SK-N-SH (cell line): ENCODE measurements at regions of chr1 and their contacts with region 1.

Region 1: GRCh38 chr1:18299441-18300338 is 181.0 kb upstream of the KLHDC7A start:
- DNase-seq: peak; percentile 73
- H3K4me3 ChIP-seq: no peak overlapping the region; a peak in 1 of 4 replicates
- H3K27ac ChIP-seq: no peak overlapping the region
- H3K4me1 ChIP-seq: peaks cover 0 to 4% of the 10 kb centered on the region in 2 experiments; a peak in 1 of 4 replicates
- H3K27me3 ChIP-seq: no peaks in the 10 kb centered on the region
- CTCF ChIP-seq: peak; percentile 41
- EP300 ChIP-seq: no peak
- RAD21 ChIP-seq: peak; percentile 58

Region 2: GRCh38 chr1:18139198-18139981 is 160.3 kb before region 1 on chr1:
- CTCF ChIA-PET with region 1: interaction called, 11 read pairs
- POLR2A ChIA-PET with region 1: no interaction called
- DNase-seq: peak; percentile 55
- H3K4me3 ChIP-seq: no peak overlapping the region
- H3K27ac ChIP-seq: peak overlapping the region in 1 of 2 experiments; percentile 92; a peak in 2 of 4 replicates
- H3K4me1 ChIP-seq: peaks cover 0 to 70% of the 10 kb centered on the region in 2 experiments; a peak in 1 of 4 replicates
- H3K27me3 ChIP-seq: no peaks in the 10 kb centered on the region
- CTCF ChIP-seq: no peak
- EP300 ChIP-seq: peak in 1 of 2 experiments; percentile 66; a peak in 2 of 4 replicates
- RAD21 ChIP-seq: peak; percentile 24; the same call in 1 of the 2 replicates

Region 3: GRCh38 chr1:18187054-18187453 is 112.6 kb before region 1 on chr1:
- CTCF ChIA-PET with region 1: no interaction called
- POLR2A ChIA-PET with region 1: no interaction called
- DNase-seq: no peak
- H3K4me3 ChIP-seq: no peak overlapping the region
- H3K27ac ChIP-seq: no peak overlapping the region
- H3K4me1 ChIP-seq: peaks cover 0 to 37% of the 10 kb centered on the region in 2 experiments; a peak in 1 of 4 replicates
- H3K27me3 ChIP-seq: no peaks in the 10 kb centered on the region
- CTCF ChIP-seq: no peak
- EP300 ChIP-seq: no peak
- RAD21 ChIP-seq: no peak

Region 4: DNA sequence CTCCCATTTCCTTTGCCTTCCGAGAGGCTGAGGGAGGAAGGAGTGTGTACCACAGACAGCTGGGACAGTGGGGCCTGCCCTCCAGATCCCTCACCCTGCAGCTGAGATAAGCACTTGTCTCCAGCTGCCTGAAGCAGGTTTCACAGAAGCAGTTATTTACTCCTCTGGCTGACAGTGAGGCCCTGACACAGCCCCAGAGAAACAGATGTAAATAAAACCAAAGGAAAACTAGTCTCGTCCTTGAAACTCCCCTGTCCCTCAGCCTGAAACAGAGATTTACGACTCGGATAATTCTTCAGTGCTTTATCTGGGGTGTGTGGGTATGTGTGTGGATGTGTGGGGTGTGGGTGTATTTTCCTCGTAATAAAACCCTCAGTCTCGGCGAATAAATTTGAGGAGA is 11.0 kb before region 1 on chr1:
- CTCF ChIA-PET with region 1: interaction called, 72 read pairs
- POLR2A ChIA-PET with region 1: no interaction called
- DNase-seq: peak; percentile 77
- H3K4me3 ChIP-seq: no peak overlapping the region
- H3K27ac ChIP-seq: peak overlapping the region in 1 of 2 experiments; percentile 73; a peak in 2 of 4 replicates
- H3K4me1 ChIP-seq: peaks cover 0 to 25% of the 10 kb centered on the region in 2 experiments; a peak in 2 of 4 replicates
- H3K27me3 ChIP-seq: no peaks in the 10 kb centered on the region
- CTCF ChIP-seq: no peak
- EP300 ChIP-seq: no peak; a peak in 1 of 4 replicates
- RAD21 ChIP-seq: no peak; the same call in 1 of the 2 replicates

Region 5: DNA sequence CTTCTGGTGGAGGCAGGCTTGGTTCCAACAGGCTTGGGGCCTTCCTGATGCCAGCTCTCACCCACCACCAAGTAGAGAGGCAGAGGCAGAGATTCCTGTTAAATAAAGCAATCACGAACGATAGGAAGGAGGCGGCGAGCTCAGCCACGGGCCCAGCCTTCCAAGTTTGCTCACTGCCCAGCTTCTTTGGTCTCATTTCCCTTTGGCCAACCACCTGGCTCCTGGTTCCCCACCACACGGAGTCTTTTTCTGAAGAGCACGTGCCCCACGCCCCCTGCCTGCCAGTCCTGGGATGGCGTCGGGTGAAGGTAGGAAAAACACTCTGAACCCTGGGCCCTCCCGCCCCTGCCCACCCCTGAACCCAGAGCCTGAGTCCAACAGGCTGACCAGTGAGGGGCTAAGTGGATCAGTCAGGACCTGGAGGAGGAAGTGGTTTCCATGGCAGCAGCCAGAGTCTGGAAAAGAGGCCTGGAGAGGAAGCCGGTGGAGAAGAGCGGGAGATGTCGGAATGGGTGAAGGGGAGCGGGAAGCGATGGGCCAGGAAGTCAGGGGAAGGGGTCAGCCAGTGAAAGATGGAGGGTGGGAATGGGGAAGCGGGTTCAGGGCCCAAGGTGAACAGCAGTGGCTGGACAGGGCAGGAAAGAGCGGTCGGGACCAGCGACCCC is 22.8 kb after region 1 on chr1:
- CTCF ChIA-PET with region 1: interaction called, 23 read pairs
- POLR2A ChIA-PET with region 1: no interaction called
- DNase-seq: peak; percentile 58
- H3K4me3 ChIP-seq: no peak overlapping the region
- H3K27ac ChIP-seq: no peak overlapping the region
- H3K4me1 ChIP-seq: peaks cover 0 to 21% of the 10 kb centered on the region in 2 experiments; a peak in 1 of 4 replicates
- H3K27me3 ChIP-seq: no peaks in the 10 kb centered on the region
- CTCF ChIP-seq: no peak
- EP300 ChIP-seq: no peak
- RAD21 ChIP-seq: no peak; the same call in 1 of the 2 replicates